Naive thymus-derived CD4-positive, alpha-beta T cell (primary cell): ENCODE measurements at regions of chr14 and their contacts with region 1.

Region 1: DNA sequence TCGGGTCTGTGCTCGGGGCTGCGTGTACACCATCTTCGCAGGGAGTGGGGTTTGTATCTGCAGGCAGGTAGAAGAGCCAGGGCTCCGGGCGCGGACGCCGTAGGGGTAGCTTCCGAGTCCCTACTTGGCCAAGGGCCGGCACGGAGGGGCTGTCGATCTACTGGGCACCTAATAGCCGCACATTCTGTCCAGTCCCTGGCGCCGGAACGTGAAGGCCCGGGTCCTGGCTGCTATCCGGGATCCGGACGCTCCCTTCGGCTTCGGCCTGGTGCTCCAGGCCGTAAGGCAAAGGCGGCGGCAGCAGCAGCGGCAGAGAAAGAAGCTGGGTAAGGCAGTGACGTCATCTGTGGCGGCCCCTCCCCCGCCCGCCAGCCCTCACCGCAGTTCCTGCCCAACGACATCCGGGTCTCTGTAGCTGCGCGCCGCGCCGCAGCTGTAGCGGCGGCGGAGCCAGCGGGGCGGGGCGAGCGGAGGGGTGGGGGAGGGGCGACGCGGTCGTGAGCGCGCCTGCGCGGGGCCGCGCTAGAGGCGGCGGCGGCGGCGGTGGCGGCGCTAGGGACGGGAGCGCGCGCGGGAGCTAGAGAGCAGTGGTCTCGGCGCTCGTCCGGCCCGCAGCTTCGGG is at the start of gene PPM1A:
- DNase-seq: peak; percentile 91 to 95 (median 93)
- ATAC-seq: peak; percentile 89
- H3K4me3 ChIP-seq: peak within 1 kb of the TSS; percentile 93
- H3K4me3 Mint-ChIP-seq: peak within 1 kb of the TSS; percentile 90 to 99 (median 96)
- H3K27ac ChIP-seq: peak within 1 kb of the TSS; percentile 100
- H3K27ac Mint-ChIP-seq: peak within 1 kb of the TSS; percentile 97 to 100 (median 100)
- H3K4me1 ChIP-seq: peaks cover 7 to 44% of the 10 kb centered on the region in 2 donors
- H3K4me1 Mint-ChIP-seq: peaks cover 40 to 58% (median 50%) of the 10 kb centered on the region in 7 donors
- H3K27me3 ChIP-seq: no peaks in the 10 kb centered on the region
- H3K27me3 Mint-ChIP-seq: no peaks in the 10 kb centered on the region
- total RNA-seq, gene PPM1A: 42.0 to 71.4 (median 47.3) TPM

Region 2: DNA sequence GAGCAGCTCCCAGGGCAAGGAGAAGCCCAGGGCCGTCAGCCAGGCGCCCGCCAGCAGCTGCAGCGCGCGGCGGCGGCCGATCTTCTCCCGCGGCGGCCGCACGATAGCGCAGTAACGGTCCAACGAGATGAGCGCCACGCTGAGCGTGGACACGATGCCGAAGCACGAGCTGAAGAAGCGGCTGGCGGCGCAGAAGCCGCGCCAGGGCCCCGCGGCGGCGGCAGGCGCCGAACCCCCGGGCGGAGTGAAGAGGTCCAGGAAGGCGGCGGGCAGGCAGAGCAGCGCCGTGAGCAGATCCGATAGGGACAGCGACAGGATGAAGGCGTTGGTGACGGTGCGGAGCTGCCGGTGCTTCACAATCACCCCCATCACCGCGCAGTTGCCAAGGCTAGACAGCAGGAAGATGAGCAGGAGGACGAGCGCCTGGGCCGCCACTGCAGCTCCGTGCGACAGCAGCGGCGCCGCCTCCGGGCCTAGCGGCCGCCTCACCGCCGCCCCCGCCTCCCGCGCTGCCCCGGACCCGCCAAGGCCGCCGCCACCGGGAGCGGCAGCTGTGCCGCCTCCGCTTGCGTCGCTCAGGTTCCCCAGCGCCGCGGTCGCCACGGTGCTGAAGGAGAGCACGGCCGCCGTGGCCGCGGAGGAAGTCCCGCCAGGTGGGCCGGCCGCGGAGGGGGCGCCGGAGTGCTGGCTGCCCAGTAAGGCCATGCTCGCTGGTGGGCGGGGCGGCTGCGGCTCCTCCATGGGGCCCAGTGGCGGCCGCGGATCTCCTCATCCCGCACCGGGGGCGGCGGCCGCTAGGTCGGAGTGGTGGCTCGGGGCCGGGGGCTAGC is 784.1 kb before region 1 on chr14:
- CTCF ChIA-PET with region 1: no interaction called
- POLR2A ChIA-PET with region 1: no interaction called
- intact Hi-C with region 1: loop called in 1 of 2 experiments (anchors 5 kb)
- DNase-seq: peak; percentile 40 to 71 (median 59)
- ATAC-seq: peak; percentile 78
- H3K4me3 ChIP-seq: peak overlapping the region; percentile 66
- H3K4me3 Mint-ChIP-seq: peak overlapping the region; percentile 85 to 94 (median 90)
- H3K27ac ChIP-seq: peak overlapping the region; percentile 65
- H3K27ac Mint-ChIP-seq: peak overlapping the region in 5 of 9 donors; percentile 60 to 82 (median 72)
- H3K4me1 ChIP-seq: peaks cover 0 to 9% of the 10 kb centered on the region in 2 donors
- H3K4me1 Mint-ChIP-seq: peaks cover 0 to 17% (median 7%) of the 10 kb centered on the region in 7 donors
- H3K27me3 ChIP-seq: no peaks in the 10 kb centered on the region
- H3K27me3 Mint-ChIP-seq: peaks cover 8 to 16% (median 12%) of the 10 kb centered on the region in 5 donors

Region 3: GRCh38 chr14:60164712-60165546 is 83.9 kb before region 1 on chr14 and contains the start of gene DHRS7:
- CTCF ChIA-PET with region 1: no interaction called
- POLR2A ChIA-PET with region 1: interaction called, 46 read pairs
- intact Hi-C with region 1: loop called (anchors 1 to 2 kb)
- DNase-seq: peak; percentile 47 to 75 (median 60)
- ATAC-seq: peak; percentile 85
- H3K4me3 ChIP-seq: peak within 1 kb of the TSS; percentile 85
- H3K4me3 Mint-ChIP-seq: peak within 1 kb of the TSS; percentile 86 to 99 (median 95)
- H3K27ac ChIP-seq: peak within 1 kb of the TSS; percentile 90
- H3K27ac Mint-ChIP-seq: peak within 1 kb of the TSS; percentile 91 to 99 (median 97)
- H3K4me1 ChIP-seq: peaks cover 20 to 27% of the 10 kb centered on the region in 2 donors
- H3K4me1 Mint-ChIP-seq: peaks cover 22 to 53% (median 42%) of the 10 kb centered on the region in 7 donors
- H3K27me3 ChIP-seq: no peaks in the 10 kb centered on the region
- H3K27me3 Mint-ChIP-seq: no peaks in the 10 kb centered on the region
- total RNA-seq, gene DHRS7: 29.9 to 50.9 (median 38.0) TPM

Region 4: GRCh38 chr14:60288279-60288678 is 39.5 kb after region 1 on chr14:
- CTCF ChIA-PET with region 1: interaction called, 5 read pairs
- POLR2A ChIA-PET with region 1: no interaction called
- intact Hi-C with region 1: loop called in 1 of 2 experiments (anchors 2 kb)
- DNase-seq: no peak
- ATAC-seq: no peak
- H3K4me3 ChIP-seq: no peak overlapping the region
- H3K4me3 Mint-ChIP-seq: no peak overlapping the region
- H3K27ac ChIP-seq: no peak overlapping the region
- H3K27ac Mint-ChIP-seq: no peak overlapping the region
- H3K4me1 ChIP-seq: no peaks in the 10 kb centered on the region
- H3K4me1 Mint-ChIP-seq: peaks cover 0 to 4% (median 0%) of the 10 kb centered on the region in 7 donors
- H3K27me3 ChIP-seq: no peaks in the 10 kb centered on the region
- H3K27me3 Mint-ChIP-seq: no peaks in the 10 kb centered on the region

Region 5: DNA sequence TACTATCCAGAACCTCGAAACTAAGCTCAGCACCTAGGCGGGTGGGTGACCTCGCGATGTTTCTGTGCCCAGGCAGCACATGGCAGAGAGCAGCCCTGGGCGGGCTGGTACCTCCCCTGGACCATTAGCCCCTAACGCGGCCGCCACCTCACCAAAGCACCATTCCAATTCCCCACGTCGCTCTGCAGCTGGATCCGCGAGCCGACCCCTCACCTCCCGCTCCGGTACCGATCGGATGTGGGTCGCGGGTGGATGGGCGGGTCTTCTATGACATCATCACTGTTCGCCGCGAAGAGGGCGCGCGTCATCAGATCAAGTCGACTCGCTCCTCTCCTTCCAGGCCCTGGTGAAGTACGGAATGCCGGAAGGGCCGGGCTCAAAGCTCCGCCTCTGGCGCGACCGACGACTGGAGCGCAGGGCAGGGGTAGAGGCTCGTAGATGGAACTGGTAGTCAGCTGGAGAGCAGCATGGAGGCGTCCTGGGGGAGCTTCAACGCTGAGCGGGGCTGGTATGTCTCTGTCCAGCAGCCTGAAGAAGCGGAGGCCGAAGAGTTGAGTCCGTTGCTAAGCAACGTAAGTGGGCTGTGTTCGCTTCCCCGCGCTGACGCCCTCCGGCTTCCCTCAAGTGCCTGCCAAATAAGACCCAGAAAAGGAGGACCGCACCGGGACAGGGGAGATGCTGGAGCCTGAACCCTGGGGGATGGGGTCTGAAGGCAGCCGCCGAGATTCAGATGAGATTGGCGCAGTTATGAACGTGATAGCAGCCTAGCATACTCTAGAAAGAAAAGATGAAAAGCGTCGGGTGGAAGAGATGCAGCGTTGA is 732.2 kb after region 1 on chr14 and contains the starts of genes SLC38A6 and TRMT5:
- CTCF ChIA-PET with region 1: no interaction called
- POLR2A ChIA-PET with region 1: interaction called, 10 read pairs
- intact Hi-C with region 1: loop called (anchors 1 kb)
- DNase-seq: peak; percentile 84 to 95 (median 93)
- ATAC-seq: peak; percentile 91
- H3K4me3 ChIP-seq: peak within 1 kb of the TSS; percentile 94
- H3K4me3 Mint-ChIP-seq: no peak within 1 kb of the TSS
- H3K27ac ChIP-seq: peak within 1 kb of the TSS; percentile 88
- H3K27ac Mint-ChIP-seq: no peak within 1 kb of the TSS
- H3K4me1 ChIP-seq: peaks cover 11 to 14% of the 10 kb centered on the region in 2 donors
- H3K4me1 Mint-ChIP-seq: peaks cover 12 to 39% (median 26%) of the 10 kb centered on the region in 7 donors
- H3K27me3 ChIP-seq: no peaks in the 10 kb centered on the region
- H3K27me3 Mint-ChIP-seq: no peaks in the 10 kb centered on the region
- total RNA-seq, gene SLC38A6: 8.9 to 21.9 (median 15.8) TPM
- total RNA-seq, gene TRMT5: 1.9 to 10.6 (median 6.5) TPM

Region 6: DNA sequence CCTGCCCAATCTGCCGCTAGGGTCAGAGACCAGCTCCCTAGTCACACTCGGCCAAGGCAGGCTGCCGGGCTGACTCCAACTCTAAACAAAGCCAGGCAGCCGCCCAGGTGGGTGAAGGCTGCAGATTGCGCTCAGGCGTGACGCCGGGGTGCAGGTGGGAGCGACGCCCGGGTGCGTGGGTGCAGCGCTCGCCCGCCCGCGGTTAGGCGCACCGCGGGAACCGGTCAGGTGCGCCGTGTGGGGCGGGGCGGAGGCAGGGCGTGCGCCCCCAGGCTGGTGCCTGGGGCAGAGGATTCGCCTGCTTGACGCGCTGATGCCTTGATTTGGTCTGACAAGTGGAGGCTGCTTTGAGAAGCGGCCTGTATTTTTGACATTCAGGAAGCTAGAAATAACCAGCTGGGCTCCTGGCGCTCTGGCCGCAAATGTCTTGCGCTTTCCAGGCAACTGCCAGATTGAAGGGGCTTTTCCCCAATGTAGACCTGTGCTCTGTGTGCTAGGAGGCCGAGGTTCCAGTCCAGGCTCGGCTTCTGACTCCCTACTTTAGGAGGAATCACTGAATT is 1319.8 kb after region 1 on chr14:
- CTCF ChIA-PET with region 1: no interaction called
- POLR2A ChIA-PET with region 1: no interaction called
- intact Hi-C with region 1: loop called in 1 of 2 experiments (anchors 10 kb)
- DNase-seq: peak; percentile 49 to 77 (median 73)
- ATAC-seq: peak; percentile 86
- H3K4me3 ChIP-seq: peak overlapping the region; percentile 47
- H3K4me3 Mint-ChIP-seq: peak overlapping the region; percentile 74 to 89 (median 82)
- H3K27ac ChIP-seq: peak overlapping the region; percentile 26
- H3K27ac Mint-ChIP-seq: peak overlapping the region; percentile 44 to 95 (median 86)
- H3K4me1 ChIP-seq: peaks cover 0 to 34% of the 10 kb centered on the region in 2 donors
- H3K4me1 Mint-ChIP-seq: peaks cover 40 to 77% (median 57%) of the 10 kb centered on the region in 7 donors
- H3K27me3 ChIP-seq: no peaks in the 10 kb centered on the region
- H3K27me3 Mint-ChIP-seq: peaks cover 0 to 10% (median 0%) of the 10 kb centered on the region in 5 donors